ENCODE measurements at regions of chr3 and their contacts with region 1.

Region 1: DNA sequence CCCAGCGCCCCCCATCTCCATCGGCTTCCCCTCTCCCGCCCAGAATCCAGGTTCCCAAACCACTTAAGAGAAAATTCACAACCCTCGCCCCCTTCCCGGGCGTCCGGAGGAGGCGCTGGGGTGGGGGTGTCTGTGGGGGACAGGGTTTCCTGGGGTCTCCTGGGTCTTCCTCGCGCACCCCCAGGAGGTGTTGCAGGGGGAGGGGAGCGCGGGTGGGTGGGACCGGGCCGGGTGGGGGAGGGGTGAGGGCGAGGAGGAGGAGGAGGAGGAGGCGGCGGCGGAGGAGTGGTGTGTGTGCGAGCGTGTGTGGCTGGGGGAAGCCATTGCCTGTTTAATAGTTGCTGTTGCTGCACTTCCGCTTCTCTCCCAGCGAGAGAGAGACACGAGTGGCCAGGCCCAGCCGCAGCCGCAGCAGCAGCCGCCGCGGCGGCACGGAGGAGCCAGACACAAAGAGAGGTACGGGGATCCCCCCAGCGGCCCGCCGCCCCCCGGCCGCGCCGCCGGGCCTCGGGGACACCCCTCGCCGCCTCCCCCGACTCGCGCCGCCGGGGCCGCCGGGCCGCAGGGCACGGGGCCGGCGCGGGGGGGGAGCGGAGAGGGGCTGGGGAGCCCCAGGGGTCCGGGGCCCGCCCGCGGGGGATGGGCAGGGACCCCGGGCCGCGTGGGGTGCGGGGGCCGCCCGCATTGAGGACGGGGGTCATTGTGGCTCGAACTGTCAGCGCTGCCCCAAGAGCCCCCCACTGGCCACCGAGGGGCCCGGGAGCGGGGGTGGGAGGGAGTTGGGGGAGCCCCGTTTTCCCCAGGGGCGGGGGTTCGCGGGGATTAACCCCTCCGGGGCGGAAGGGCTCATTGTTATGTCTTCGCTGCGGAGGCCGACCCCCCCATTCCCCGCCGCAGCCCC is at the start of gene UBE2E1:
- DNase-seq: peak; percentile 85 to 91
- ATAC-seq: peak; percentile 75
- H3K4me3 ChIP-seq: peak within 1 kb of the TSS; percentile 69 to 96
- H3K27ac ChIP-seq: no peak within 1 kb of the TSS
- H3K4me1 ChIP-seq: no peaks in the 10 kb centered on the region
- H3K27me3 ChIP-seq: no peaks in the 10 kb centered on the region
- total RNA-seq, gene UBE2E1: 87.2 to 96.8 TPM

Region 2: DNA sequence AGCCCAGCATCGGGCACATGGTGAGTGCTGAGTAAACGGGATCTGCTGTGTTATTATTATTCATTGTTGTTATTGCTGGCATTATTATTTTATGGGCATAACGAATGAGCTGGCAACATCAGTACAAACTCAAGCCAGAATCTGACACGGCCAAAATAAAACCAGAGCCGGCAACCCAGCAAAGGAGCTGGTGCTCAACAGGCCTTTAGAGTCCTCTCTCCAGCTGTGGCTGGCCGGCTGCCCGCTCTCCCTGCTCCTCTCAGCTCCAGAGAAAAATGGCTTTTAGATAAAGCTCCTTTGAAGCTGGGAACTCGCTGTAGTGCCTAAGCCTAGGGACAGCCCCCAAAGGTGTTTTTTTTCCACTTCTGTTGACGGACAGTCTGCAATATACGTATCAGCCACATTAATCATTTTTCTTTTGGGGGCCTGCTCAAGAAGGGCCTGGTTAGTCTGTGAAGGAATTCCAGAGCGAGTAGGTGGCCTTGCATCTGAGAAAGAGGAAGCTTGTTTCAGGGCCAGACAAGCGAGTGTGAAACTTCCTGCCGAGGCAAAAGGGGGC is 194.1 kb before region 1 on chr3:
- intact Hi-C with region 1: loop called in 1 of 2 experiments (anchors 10 kb)
- DNase-seq: peak; percentile 85 to 89
- ATAC-seq: peak; percentile 78
- H3K4me3 ChIP-seq: peak overlapping the region; percentile 2 to 11
- H3K27ac ChIP-seq: peak overlapping the region; percentile 28 to 69
- H3K4me1 ChIP-seq: no peaks in the 10 kb centered on the region
- H3K27me3 ChIP-seq: no peaks in the 10 kb centered on the region